Right ventricle myocardium inferior (tissue), 1 donor: ENCODE measurements at regions of chr13 and their contacts with region 1.

Region 1: DNA sequence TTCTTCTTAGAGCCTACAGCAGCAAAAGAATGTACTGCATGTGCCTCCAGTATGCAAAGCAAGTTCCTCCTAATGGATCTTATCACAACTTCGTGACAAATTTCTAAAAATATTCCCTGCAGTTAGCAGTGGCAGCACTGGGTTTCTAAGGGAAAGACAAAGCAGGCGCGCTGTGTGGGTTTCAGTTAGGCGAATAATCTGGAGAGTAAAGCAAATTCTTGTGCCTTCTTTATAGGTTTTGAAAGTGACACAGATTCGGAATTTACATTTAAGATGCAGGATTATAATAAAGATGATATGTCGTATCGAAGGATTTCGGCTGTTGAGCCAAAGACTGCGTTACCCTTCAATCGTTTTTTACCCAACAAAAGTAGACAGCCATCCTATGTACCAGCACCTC is 167.9 kb downstream of the LMO7 start:
- DNase-seq: no peak
- ATAC-seq: peak; percentile 84

Region 2: DNA sequence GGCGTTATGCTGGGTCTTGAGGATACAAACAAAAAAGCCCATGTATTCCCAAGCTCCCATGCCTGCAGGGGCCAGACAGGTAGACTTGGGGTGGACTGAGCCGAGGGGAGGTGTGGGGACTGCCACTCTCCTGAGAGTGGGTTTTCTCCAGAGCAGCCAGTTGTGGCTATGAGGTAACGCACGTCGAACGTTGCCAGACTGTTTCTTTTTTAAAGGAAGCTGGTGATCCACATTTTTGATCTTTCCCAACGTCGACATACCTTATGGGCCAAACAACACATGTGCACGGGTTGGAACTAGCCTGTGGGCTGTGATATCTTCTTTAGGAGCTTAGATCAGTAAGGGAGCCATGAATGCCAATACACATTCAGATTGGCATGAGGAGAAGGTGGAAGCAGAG is 107.3 kb before region 1 on chr13:
- intact Hi-C with region 1: loop called (anchors 2 kb)
- DNase-seq: no peak
- ATAC-seq: no peak

Region 3: GRCh38 chr13:75762076-75762937 is 41.7 kb before region 1 on chr13:
- intact Hi-C with region 1: loop called (anchors 1 kb)
- DNase-seq: no peak
- ATAC-seq: peak; percentile 11